ENCODE measurements at regions of chr2 and their contacts with region 1.

Region 1: DNA sequence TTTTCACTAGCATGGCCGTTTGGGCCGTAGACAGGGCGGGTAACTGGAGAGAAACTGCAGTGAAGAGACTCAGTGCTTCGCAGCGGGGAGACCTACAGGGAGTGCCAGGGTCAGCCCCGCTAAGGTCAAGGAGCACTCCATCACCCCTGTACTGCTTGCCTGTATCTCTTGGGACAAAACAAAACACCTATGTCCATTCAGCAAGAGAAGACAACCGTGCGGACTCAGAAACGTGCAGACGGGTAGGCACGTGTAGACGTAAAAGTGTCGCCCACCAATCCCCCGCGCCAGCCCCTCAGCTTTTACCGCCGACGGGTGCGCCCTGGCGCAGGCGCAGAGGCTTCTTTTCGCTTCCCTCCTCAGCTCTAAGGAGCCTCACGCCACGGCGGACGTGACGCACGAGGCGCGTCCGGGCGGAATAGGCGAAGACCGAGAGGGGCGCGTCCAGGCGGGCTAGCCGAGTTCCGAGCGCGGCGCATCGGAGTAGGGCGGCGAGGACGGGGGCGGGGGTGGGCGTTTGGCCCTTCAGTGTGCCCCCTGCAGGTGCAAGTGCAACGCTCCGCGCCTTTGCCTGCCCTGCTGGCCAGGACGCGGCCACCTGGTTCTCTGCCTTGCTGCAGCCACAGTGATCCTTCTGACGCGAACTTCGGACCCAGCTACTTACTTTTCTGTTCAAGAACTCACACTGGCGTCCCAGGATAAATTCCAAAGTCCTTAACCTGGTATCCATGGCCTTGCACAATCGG is 3.3 kb upstream of the SOS1 start:
- DNase-seq: peak; percentile 95
- H3K4me3 ChIP-seq: peak overlapping the region; percentile 87 to 89
- H3K27ac ChIP-seq: peak overlapping the region; percentile 70 to 97
- H3K4me1 ChIP-seq: peaks cover 6 to 34% of the 10 kb centered on the region in 2 experiments; a peak in 3 of 4 replicates
- H3K27me3 ChIP-seq: no peaks in the 10 kb centered on the region
- CTCF ChIP-seq: peak; percentile 68
- EP300 ChIP-seq: peak in 1 of 2 experiments; percentile 48; a peak in 1 of 4 replicates
- RAD21 ChIP-seq: peak; percentile 41; the same call in 1 of the 2 replicates

Region 2: DNA sequence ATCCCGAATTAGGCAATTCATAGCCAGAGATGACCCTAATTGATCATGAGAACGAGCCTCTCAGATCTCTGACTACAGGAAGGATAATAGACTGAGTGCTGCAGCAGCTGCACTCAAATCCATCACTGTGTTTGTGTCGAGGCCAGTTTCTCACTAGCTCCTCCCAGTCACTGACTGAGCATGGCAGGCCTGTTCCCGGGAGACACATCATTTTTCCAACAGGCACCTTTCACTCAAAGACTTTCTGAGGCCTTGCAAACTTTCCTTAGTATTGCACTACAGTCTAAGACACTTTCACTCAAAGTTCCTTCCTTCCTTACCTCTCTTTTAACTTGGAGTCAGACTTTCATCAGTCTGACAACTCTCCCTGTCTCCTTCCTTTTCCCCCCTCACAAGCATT is 17.0 kb before region 1 on chr2:
- CTCF ChIA-PET with region 1: interaction called, 46 read pairs
- POLR2A ChIA-PET with region 1: interaction called, 16 read pairs
- DNase-seq: peak; percentile 83
- H3K4me3 ChIP-seq: no peak overlapping the region
- H3K27ac ChIP-seq: peak overlapping the region; percentile 18 to 43; a peak in 2 of 4 replicates
- H3K4me1 ChIP-seq: peaks cover 12 to 20% of the 10 kb centered on the region in 2 experiments; a peak in 3 of 4 replicates
- H3K27me3 ChIP-seq: no peaks in the 10 kb centered on the region
- CTCF ChIP-seq: no peak
- EP300 ChIP-seq: no peak
- RAD21 ChIP-seq: no peak

Region 3: DNA sequence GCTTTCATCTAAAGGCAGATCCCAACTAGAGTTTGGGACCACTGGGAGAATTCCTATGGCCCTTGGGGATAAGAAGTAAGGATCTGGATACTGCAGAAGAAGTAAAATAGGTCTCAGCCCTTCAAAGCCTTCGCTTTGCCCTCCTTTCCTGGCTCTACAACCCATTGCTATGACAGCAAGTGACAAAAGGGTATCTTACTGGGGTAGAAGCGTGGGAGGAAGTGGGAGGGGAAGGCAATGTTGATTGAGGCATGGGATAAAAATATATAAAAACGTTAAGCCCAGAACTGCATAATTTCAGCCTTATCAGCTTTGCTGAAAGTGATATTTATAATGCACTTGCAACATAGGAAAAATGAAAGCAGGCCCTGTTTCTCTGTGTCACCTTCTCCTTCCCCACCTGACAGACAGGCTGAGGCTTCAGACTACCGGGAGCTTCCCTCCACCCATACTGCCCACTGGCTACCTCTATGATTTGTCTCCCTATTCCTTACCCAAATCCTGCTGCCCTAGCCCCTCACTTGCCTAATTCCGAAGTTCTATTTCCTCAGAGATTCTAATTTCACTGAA is 11.6 kb after region 1 on chr2:
- CTCF ChIA-PET with region 1: interaction called, 14 read pairs
- POLR2A ChIA-PET with region 1: no interaction called
- DNase-seq: no peak
- H3K4me3 ChIP-seq: no peak overlapping the region
- H3K27ac ChIP-seq: no peak overlapping the region
- H3K4me1 ChIP-seq: peaks cover 4% of the 10 kb centered on the region in 2 experiments; a peak in 2 of 4 replicates
- H3K27me3 ChIP-seq: no peaks in the 10 kb centered on the region
- CTCF ChIP-seq: no peak
- EP300 ChIP-seq: no peak
- RAD21 ChIP-seq: no peak